ENCODE measurements at regions of chr1 and their contacts with region 1.

Region 1: GRCh38 chr1:212477014-212477679 is 44.4 kb downstream of the NENF start:
- DNase-seq: peak; percentile 86
- H3K4me3 ChIP-seq: no peak overlapping the region; a peak in 1 of 4 replicates
- H3K27ac ChIP-seq: no peak overlapping the region
- H3K4me1 ChIP-seq: no peaks in the 10 kb centered on the region; a peak in 1 of 4 replicates
- H3K27me3 ChIP-seq: no peaks in the 10 kb centered on the region; the same call in 1 of the 2 replicates
- CTCF ChIP-seq: peak; percentile 90
- EP300 ChIP-seq: no peak
- RAD21 ChIP-seq: peak; percentile 96

Region 2: DNA sequence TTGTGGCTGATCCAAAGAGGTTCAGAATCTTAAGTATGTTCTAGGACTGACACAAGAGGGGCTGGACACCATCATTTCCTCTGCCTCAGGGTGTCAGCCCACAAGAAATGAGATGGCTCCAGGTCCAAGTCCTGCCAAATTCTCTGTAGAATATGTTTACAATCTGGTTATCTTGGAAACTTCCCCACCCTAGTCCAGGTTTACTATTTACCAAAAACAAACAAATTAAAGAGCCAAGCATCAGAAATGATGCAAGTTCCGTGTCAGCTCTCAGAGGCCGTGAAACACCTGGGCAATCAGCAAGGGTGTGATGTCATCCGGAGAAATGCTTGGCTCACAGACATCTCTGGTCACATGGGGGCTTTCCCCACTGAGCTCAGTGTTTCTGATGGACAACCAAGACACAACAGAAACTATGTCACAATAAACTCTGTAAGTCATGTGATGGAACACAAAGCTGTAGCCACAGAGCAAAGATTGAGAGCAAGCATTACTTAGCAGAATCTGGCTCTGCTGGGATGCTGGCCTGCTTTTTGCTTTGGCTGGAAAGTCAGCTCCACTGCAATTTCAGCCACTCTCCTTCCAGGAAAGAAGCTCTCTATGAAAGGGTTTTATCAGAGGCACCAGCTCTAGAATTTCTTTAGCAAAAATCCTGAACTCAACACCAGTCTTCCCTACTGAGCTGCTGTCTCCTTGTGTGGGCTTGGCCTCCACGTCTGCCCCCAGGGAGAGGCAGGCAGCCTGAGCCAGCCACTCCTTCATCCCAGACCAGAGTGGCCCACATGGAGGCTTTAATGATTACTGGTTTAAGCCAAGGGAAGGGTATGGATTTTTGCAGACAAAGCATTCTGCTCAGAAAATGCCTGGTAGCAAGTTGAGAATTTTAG is 11.5 kb after region 1 on chr1:
- CTCF ChIA-PET with region 1: interaction called, 19 read pairs
- POLR2A ChIA-PET with region 1: no interaction called
- DNase-seq: no peak
- H3K4me3 ChIP-seq: no peak overlapping the region
- H3K27ac ChIP-seq: no peak overlapping the region
- H3K4me1 ChIP-seq: peaks cover 0 to 15% of the 10 kb centered on the region in 2 experiments; a peak in 1 of 4 replicates
- H3K27me3 ChIP-seq: 0 out of 2 replicates have a peak, but pooled peaks cover 8% of the 10 kb centered on the region
- CTCF ChIP-seq: no peak
- EP300 ChIP-seq: no peak
- RAD21 ChIP-seq: no peak

Region 3: GRCh38 chr1:212558693-212559480 is 81.7 kb after region 1 on chr1:
- CTCF ChIA-PET with region 1: interaction called, 22 read pairs
- POLR2A ChIA-PET with region 1: no interaction called
- DNase-seq: peak; percentile 97
- H3K4me3 ChIP-seq: peak overlapping the region; percentile 64 to 78
- H3K27ac ChIP-seq: peak overlapping the region; percentile 37 to 85; a peak in 3 of 4 replicates
- H3K4me1 ChIP-seq: peaks cover 0 to 16% of the 10 kb centered on the region in 2 experiments; a peak in 1 of 4 replicates
- H3K27me3 ChIP-seq: no peaks in the 10 kb centered on the region
- CTCF ChIP-seq: no peak
- EP300 ChIP-seq: no peak; a peak in 1 of 4 replicates
- RAD21 ChIP-seq: no peak

Region 4: GRCh38 chr1:212621951-212622305 is 144.8 kb after region 1 on chr1:
- CTCF ChIA-PET with region 1: interaction called, 14 read pairs
- POLR2A ChIA-PET with region 1: no interaction called
- DNase-seq: no peak
- H3K4me3 ChIP-seq: no peak overlapping the region
- H3K27ac ChIP-seq: no peak overlapping the region
- H3K4me1 ChIP-seq: no peaks in the 10 kb centered on the region
- H3K27me3 ChIP-seq: peaks cover 11% of the 10 kb centered on the region; the same call in 1 of the 2 replicates
- CTCF ChIP-seq: no peak
- EP300 ChIP-seq: no peak
- RAD21 ChIP-seq: no peak

Region 5: GRCh38 chr1:212716161-212716560 is 239.0 kb after region 1 on chr1:
- CTCF ChIA-PET with region 1: interaction called, 11 read pairs
- POLR2A ChIA-PET with region 1: no interaction called
- DNase-seq: no peak
- H3K4me3 ChIP-seq: no peak overlapping the region
- H3K27ac ChIP-seq: no peak overlapping the region
- H3K4me1 ChIP-seq: no peaks in the 10 kb centered on the region; a peak in 1 of 4 replicates
- H3K27me3 ChIP-seq: no peaks in the 10 kb centered on the region
- CTCF ChIP-seq: no peak
- EP300 ChIP-seq: no peak
- RAD21 ChIP-seq: no peak

Region 6: DNA sequence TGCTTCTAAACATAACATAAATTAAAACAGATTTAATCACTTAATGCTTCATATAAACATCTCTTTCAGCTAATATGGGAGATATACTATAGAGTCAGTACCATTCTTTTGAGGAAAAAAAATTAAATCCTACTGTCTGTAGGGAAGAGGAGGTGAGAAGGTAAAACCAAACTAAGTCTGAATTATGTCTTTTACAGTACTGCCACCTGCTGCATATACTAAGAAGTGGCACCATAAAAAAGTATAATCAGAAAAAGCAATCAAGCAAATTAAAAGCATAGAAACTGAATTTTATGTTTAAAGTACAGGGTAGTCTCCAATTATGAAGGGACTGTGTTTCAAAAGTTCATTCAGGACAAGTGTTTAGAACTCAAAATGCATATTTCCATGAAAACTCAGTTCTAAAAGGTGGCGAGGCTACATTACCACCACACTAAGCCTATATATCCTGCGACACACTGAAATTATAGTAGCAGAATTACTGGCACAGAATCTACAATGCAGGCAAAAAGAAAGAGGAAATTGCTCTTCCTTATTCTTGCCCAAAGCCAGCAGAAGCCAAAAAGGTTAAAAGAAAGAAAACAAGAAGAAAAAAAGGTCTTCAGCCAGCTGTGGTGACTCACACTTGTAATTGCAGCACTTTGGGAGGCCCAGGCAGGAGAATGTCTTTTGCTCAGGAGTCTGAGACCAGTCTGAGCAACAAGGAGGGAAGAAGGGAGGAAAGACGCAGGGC is 305.4 kb after region 1 on chr1:
- CTCF ChIA-PET with region 1: interaction called, 22 read pairs
- POLR2A ChIA-PET with region 1: no interaction called
- DNase-seq: peak; percentile 41
- H3K4me3 ChIP-seq: no peak overlapping the region; a peak in 1 of 4 replicates
- H3K27ac ChIP-seq: no peak overlapping the region
- H3K4me1 ChIP-seq: no peaks in the 10 kb centered on the region
- H3K27me3 ChIP-seq: no peaks in the 10 kb centered on the region
- CTCF ChIP-seq: peak; percentile 74
- EP300 ChIP-seq: no peak
- RAD21 ChIP-seq: peak; percentile 79